CD4-positive, alpha-beta T cell (primary cell): ENCODE measurements at regions of chr12 and their contacts with region 1.

Region 1: DNA sequence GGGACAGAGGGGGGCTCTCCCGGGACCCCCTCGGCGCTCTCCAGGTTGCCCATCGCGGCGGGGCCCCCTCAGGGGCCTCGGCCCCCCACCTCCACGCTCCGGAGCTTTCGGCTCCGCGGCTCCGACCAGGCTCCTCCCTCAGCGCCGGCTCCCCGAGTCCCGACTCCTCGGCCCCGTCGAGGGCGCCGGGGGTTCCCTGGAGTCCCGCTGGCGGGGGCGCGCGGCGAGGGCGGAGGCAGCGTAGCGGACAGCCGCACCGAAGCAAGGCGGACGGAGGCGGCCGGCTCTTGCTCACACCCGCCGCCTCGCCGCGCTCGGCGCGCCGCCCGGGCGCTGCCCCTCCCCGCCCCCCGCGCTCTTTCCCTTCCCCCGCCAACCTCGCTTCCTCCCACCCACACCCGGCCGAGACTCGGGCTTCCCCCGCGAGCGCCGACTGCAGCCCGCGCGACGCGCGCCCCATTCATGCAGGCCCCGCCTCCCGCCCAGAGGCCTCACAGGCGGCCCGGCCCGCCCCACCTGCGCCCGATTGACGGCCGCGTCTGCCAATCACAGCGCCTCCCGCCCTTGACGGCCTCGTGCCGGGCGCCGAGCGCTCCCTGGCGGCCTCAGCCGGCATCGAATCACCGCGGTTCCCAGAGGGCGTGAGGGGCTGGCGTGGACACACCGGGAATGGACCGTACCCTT is at the start of gene FMNL3:
- DNase-seq: peak; percentile 97 to 100 (median 99)
- ATAC-seq: peak; percentile 95
- H3K4me3 ChIP-seq: peak within 1 kb of the TSS; percentile 85
- H3K4me3 Mint-ChIP-seq: peak within 1 kb of the TSS; percentile 94
- H3K27ac ChIP-seq: peak within 1 kb of the TSS; percentile 39 to 82
- H3K27ac Mint-ChIP-seq: peak within 1 kb of the TSS; percentile 78
- H3K4me1 ChIP-seq: peaks cover 42% of the 10 kb centered on the region
- H3K4me1 Mint-ChIP-seq: peaks cover 45% of the 10 kb centered on the region
- H3K27me3 ChIP-seq: no peaks in the 10 kb centered on the region
- H3K27me3 Mint-ChIP-seq: peaks cover 4% of the 10 kb centered on the region
- CTCF ChIP-seq: peak; percentile 93
- total RNA-seq, gene FMNL3: 33.3 to 34.8 TPM

Region 2: GRCh38 chr12:49553512-49554088 is 153.7 kb before region 1 on chr12:
- CTCF ChIA-PET with region 1: interaction called, 3 read pairs
- POLR2A ChIA-PET with region 1: no interaction called
- intact Hi-C with region 1: loop called in 1 of 2 experiments (anchors 5 kb)
- DNase-seq: peak in 4 of 14 experiments; percentile 33 to 74 (median 66)
- ATAC-seq: peak; percentile 81
- H3K4me3 ChIP-seq: no peak overlapping the region
- H3K4me3 Mint-ChIP-seq: no peak overlapping the region
- H3K27ac ChIP-seq: no peak overlapping the region
- H3K27ac Mint-ChIP-seq: no peak overlapping the region
- H3K4me1 ChIP-seq: peaks cover 16% of the 10 kb centered on the region
- H3K4me1 Mint-ChIP-seq: peaks cover 7% of the 10 kb centered on the region
- H3K27me3 ChIP-seq: peaks cover 4 to 14% of the 10 kb centered on the region in 2 experiments
- H3K27me3 Mint-ChIP-seq: peaks cover 9% of the 10 kb centered on the region
- CTCF ChIP-seq: peak; percentile 73

Region 3: GRCh38 chr12:49644620-49644994 is 62.7 kb before region 1 on chr12:
- CTCF ChIA-PET with region 1: interaction called, 56 read pairs
- POLR2A ChIA-PET with region 1: interaction called, 21 read pairs
- intact Hi-C with region 1: loop called (anchors 1 kb)
- DNase-seq: peak; percentile 73 to 92 (median 80)
- ATAC-seq: peak; percentile 95
- H3K4me3 ChIP-seq: no peak overlapping the region
- H3K4me3 Mint-ChIP-seq: peak overlapping the region; percentile 2
- H3K27ac ChIP-seq: peak overlapping the region; percentile 17 to 18
- H3K27ac Mint-ChIP-seq: peak overlapping the region; percentile 78
- H3K4me1 ChIP-seq: peaks cover 31% of the 10 kb centered on the region
- H3K4me1 Mint-ChIP-seq: peaks cover 36% of the 10 kb centered on the region
- H3K27me3 ChIP-seq: no peaks in the 10 kb centered on the region
- H3K27me3 Mint-ChIP-seq: no peaks in the 10 kb centered on the region
- CTCF ChIP-seq: peak; percentile 98

Region 4: DNA sequence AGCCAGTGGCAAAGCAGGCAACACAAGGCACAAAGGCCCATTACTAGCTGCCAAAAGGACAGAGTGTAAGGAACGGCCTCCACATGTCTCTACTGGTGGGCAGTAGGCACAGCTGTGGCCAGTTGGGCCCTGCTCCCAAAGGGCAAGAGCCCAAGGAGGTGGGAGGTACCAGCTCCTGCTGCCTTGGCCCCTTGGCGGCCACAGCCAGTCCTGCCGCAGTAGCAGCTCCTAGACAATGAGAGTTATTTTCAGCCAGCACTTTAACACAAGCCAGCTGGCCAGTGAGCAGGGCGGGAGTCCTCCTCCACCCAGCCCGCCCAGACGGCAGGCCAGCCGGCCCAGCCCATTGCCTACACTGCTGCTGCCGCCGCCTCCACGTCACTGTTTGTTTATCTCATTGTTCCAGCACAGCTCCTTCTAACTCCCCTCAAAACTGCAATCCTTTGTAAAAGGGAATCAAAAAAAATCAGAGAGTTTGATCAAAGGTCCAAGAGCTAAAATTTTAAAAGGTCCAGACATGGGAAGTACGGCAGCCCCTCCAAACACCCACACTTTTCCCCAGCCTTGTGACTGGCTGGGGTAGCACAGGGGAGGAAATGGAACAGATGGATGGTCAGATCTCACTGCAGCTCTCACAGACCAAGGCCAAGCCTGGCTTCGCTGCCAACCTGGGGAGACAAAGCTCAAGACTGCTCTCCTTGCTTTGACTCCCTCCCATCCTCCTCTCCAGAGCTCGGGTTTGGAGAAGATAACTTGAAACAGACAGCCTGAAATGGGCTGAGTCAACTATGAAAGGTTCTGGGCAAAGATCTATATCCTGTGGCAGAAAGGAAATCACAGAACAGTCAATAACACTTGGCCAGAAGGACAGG is 33.6 kb before region 1 on chr12:
- CTCF ChIA-PET with region 1: interaction called, 15 read pairs
- POLR2A ChIA-PET with region 1: interaction called, 87 read pairs
- intact Hi-C with region 1: loop called in 1 of 2 experiments (anchors 2 kb)
- DNase-seq: peak in 6 of 14 experiments; percentile 21 to 55 (median 32)
- ATAC-seq: peak; percentile 7
- H3K4me3 ChIP-seq: no peak overlapping the region
- H3K4me3 Mint-ChIP-seq: peak overlapping the region; percentile 72
- H3K27ac ChIP-seq: peak overlapping the region; percentile 89 to 93
- H3K27ac Mint-ChIP-seq: peak overlapping the region; percentile 97
- H3K4me1 ChIP-seq: peaks cover 71% of the 10 kb centered on the region
- H3K4me1 Mint-ChIP-seq: peaks cover 91% of the 10 kb centered on the region
- H3K27me3 ChIP-seq: no peaks in the 10 kb centered on the region
- H3K27me3 Mint-ChIP-seq: no peaks in the 10 kb centered on the region
- CTCF ChIP-seq: no peak